ENCODE measurements at regions of chr15 and their contacts with region 1.

Region 1: GRCh38 chr15:78979456-78980320 is 34.8 kb upstream of the CTSH start:
- DNase-seq: peak; percentile 71
- ATAC-seq: peak; percentile 90
- H3K4me3 Mint-ChIP-seq: no peak overlapping the region
- H3K27ac Mint-ChIP-seq: no peak overlapping the region
- H3K4me1 Mint-ChIP-seq: peaks cover 11% of the 10 kb centered on the region
- H3K27me3 Mint-ChIP-seq: peaks cover 16% of the 10 kb centered on the region
- CTCF ChIP-seq: peak; percentile 78

Region 2: DNA sequence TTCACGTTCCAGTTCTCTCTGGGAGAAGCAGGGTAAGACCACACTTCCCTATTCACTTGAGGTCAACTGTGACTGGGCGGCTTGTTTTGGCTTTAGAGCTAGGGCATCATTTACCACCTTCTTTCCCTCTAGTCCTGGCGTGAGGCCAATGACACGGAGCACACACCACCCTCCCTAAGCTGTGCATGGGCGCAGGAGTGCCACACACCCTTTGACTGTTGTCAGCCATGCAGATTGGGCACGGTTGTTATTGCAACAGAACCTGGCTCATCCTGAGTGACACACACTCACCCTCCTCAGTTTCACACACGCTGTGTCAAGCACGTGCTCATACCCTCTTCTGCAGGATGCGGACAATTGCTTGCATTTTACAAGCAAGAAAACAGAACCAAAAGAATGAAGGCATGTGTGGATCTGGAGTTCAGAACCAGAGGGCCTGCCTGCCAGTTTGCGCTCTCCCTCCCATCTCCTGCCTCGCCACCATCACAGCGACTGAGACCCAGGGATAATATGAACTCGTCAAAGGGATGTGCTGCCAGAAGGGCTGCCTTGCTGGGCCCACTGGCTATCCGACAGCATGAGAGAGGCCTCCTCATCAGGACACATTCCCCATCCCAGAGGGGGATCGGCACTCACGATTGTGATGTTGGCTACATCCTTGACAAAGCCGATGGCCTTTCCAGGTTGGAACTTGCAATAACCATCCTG is 52.5 kb before region 1 on chr15:
- CTCF ChIA-PET with region 1: interaction called, 13 read pairs
- POLR2A ChIA-PET with region 1: interaction called, 4 read pairs
- DNase-seq: no peak
- ATAC-seq: no peak
- H3K4me3 Mint-ChIP-seq: no peak overlapping the region
- H3K27ac Mint-ChIP-seq: no peak overlapping the region
- H3K4me1 Mint-ChIP-seq: peaks cover 2% of the 10 kb centered on the region; the same call in 1 of the 2 replicates
- H3K27me3 Mint-ChIP-seq: no peaks in the 10 kb centered on the region
- CTCF ChIP-seq: no peak

Region 3: GRCh38 chr15:78950904-78951840 is 28.5 kb before region 1 on chr15:
- CTCF ChIA-PET with region 1: interaction called, 14 read pairs
- POLR2A ChIA-PET with region 1: no interaction called
- DNase-seq: no peak
- ATAC-seq: peak; percentile 57
- H3K4me3 Mint-ChIP-seq: no peak overlapping the region
- H3K27ac Mint-ChIP-seq: no peak overlapping the region
- H3K4me1 Mint-ChIP-seq: peaks cover 18% of the 10 kb centered on the region
- H3K27me3 Mint-ChIP-seq: peaks cover 17% of the 10 kb centered on the region
- CTCF ChIP-seq: no peak

Region 4: GRCh38 chr15:78968539-78969271 is 11.0 kb before region 1 on chr15:
- CTCF ChIA-PET with region 1: interaction called, 18 read pairs
- POLR2A ChIA-PET with region 1: no interaction called
- DNase-seq: no peak
- ATAC-seq: no peak
- H3K4me3 Mint-ChIP-seq: peak overlapping the region; percentile 45
- H3K27ac Mint-ChIP-seq: peak overlapping the region; percentile 94
- H3K4me1 Mint-ChIP-seq: peaks cover 44% of the 10 kb centered on the region
- H3K27me3 Mint-ChIP-seq: no peaks in the 10 kb centered on the region
- CTCF ChIP-seq: no peak

Region 5: DNA sequence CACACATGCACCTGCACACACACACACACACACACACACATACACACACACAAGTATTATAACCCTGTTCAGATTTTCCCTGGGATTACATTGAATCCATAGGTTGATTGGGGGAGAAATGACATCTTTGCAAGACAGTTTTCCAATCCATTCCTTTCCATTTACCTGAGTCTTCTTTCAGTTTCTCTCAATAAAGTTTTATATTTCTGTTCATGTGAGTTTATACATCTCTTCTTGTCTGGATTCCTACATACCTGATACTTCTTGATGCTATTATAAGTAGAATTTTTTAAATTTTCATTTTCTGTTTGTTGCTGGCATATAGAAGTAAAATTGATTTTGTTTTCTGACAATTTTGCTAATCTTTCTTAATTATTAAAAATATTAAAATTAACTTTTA is 407.9 kb after region 1 on chr15:
- CTCF ChIA-PET with region 1: no interaction called
- POLR2A ChIA-PET with region 1: no interaction called
- DNase-seq: no peak
- ATAC-seq: no peak
- H3K4me3 Mint-ChIP-seq: no peak overlapping the region
- H3K27ac Mint-ChIP-seq: no peak overlapping the region
- H3K4me1 Mint-ChIP-seq: no peaks in the 10 kb centered on the region
- H3K27me3 Mint-ChIP-seq: no peaks in the 10 kb centered on the region
- CTCF ChIP-seq: no peak